ENCODE measurements at regions of chr3 and their contacts with region 1.

Region 1: DNA sequence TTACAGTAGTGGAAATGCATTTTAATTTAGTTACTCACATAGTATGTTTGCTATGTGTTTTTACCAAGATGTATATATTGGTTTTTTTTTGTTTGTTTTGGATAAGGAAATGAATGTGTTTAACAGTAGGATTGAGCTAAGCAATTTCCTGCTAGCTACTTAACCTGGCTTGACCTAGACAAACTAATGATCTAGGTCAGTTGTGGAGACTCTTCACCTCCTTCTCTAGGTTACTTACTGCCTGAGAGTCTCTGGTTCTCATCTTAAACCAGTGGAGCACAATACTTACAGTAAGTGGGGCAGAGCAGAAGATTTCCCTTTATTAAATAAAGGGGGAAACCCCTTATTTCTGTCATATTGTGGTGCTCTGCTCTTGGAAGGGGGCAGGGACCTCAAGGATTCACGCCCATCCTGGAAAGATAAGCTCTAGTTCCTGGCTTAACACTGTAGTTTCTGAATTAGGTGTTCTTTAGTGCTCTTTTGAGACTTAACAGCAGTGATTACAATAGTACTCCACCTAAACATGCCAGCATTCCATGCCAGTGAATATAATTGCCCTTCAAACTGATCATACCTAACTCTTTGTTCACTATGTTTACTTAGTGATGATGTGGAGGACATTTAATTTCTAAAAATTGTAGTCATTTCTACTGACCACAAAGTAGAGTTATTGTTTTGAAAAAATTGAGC is 79.9 kb downstream of the UBP1 start:
- DNase-seq: no peak

Region 2: DNA sequence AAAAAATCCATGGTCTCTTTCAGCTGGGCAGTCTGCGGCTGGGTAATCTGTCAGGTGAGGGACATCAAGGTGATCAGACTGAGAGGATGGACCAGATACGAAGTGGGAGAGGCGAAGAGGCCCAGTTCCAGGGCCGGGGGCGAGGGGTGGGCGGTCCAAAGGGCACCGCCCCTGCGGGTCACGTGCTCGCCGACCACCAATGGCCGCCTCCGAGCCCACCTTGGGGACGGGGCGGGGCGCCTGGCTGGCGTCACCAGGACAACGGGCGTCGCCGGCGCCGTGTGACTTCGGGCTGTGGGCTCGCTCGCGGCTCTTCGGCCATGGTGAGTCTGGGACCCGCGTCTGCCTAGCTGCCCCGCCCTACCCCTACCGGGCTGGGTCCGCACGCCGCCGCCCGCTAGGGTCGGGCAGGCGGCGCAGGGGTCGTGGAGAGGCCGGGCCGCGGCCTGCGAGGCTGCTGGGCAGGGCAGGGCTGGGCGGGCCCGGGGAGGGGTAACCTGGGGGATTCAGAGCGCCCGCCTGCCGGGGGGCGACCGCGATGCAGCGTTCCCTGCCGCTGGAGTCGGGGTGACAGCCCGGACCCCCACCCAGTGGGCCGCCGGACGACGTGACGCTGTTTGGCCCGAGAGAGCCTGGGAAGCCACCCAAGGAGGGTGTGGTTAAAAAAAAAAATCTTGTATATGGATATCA is 82.9 kb before region 1 on chr3 and contains the start of gene FBXL2:
- CTCF ChIA-PET with region 1: no interaction called
- POLR2A ChIA-PET with region 1: no interaction called
- DNase-seq: peak; percentile 98

Region 3: DNA sequence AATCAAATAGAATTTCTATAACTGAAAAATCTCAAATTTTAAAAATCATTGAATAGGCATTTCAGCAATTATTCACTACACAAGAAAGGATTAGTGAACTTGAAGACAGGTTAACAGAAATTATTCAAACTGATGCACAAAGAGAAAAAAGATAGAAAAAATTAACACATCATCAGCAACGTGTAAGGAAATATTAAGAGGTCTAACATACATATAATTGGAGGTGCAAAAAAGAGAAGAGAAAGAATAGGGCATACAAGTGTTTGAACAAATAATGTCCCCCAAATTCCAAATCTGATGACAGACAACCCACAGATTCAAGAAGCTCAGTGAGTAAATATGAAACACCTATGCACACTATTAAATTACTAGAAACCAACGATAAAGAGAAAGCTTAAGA is 25.9 kb before region 1 on chr3:
- CTCF ChIA-PET with region 1: no interaction called
- POLR2A ChIA-PET with region 1: no interaction called
- DNase-seq: no peak

Region 4: DNA sequence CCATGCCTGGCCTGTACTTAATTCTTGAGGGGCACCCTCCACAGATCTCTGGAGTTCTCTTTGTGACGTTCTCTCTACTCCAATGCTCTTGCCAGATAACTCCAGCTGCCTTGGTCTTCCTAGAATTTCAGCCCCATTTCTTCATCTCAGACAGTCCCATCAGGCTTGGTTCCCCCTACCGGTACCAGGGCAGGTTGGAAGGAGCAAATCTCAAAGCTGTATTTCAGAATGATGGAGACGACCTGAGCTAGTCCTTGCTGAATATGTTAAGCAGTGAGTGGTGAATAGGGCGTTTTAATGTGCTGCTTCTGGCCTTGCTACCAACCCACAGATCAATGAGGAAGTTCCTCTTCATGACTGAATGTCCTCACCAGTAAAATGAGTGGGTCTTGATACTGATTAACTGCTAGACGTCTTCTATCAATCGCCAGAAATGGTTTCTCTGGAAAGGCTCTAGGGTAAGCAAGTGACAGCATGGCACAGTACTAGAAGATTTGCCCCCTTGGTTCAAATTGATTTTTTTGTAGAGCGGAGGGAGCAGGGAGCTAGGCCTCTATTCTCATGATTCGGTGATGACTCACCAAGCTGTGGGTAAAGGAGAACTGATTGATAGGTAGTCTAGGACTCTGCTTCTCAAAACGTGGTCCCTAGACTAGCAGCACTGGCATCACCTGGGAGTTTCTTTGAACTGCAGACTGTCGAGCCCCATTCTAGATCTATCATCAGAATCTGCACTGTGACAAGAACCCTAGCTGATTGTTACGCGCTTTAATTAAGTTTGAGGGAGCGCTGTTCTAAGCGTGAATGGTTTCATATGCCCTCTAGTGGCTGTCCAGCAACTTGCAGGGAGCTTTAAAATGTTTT is 12.2 kb after region 1 on chr3:
- CTCF ChIA-PET with region 1: interaction called, 12 read pairs
- POLR2A ChIA-PET with region 1: no interaction called
- DNase-seq: peak; percentile 59